ENCODE measurements at regions of chr5 and their contacts with region 1.

Region 1: GRCh38 chr5:131796793-131797693 is at the start of gene FNIP1:
- DNase-seq: peak; percentile 100
- ATAC-seq: peak; percentile 97 to 98 (median 98)
- H3K4me3 ChIP-seq: peak within 1 kb of the TSS; percentile 86 to 99 (median 97)
- H3K27ac ChIP-seq: peak within 1 kb of the TSS; percentile 97 to 100 (median 99)
- H3K4me1 ChIP-seq: peaks cover 0 to 46% (median 30%) of the 10 kb centered on the region in 12 donors
- H3K27me3 ChIP-seq: no peaks in the 10 kb centered on the region
- CTCF ChIP-seq: peak in 3 of 12 donors; percentile 14 to 26 (median 20)
- POLR2A ChIP-seq: peak; percentile 86 to 97
- total RNA-seq, gene FNIP1: 27.5 to 41.3 (median 35.1) TPM

Region 2: GRCh38 chr5:131170540-131171275 is 626.3 kb before region 1 on chr5 and contains the start of gene LYRM7:
- intact Hi-C with region 1: loop called in 1 of 10 experiments (anchors 5 kb)
- DNase-seq: peak; percentile 93 to 98 (median 97)
- ATAC-seq: peak; percentile 98 to 99 (median 99)
- H3K4me3 ChIP-seq: peak within 1 kb of the TSS; percentile 45 to 78 (median 68)
- H3K27ac ChIP-seq: peak within 1 kb of the TSS; percentile 5 to 89 (median 83)
- H3K4me1 ChIP-seq: peaks cover 0 to 23% (median 19%) of the 10 kb centered on the region in 12 donors
- H3K27me3 ChIP-seq: no peaks in the 10 kb centered on the region
- CTCF ChIP-seq: peak in 1 of 12 donors; percentile 13
- POLR2A ChIP-seq: peak; percentile 58 to 79
- total RNA-seq, gene LYRM7: 11.8 to 27.1 (median 20.3) TPM

Region 3: GRCh38 chr5:131634996-131635754 is 161.9 kb before region 1 on chr5 and contains the start of gene RAPGEF6:
- intact Hi-C with region 1: loop called in 9 of 10 experiments (anchors 1 to 10 kb)
- DNase-seq: peak; percentile 97 to 99 (median 99)
- ATAC-seq: peak; percentile 95 to 98 (median 96)
- H3K4me3 ChIP-seq: peak within 1 kb of the TSS; percentile 35 to 87 (median 70)
- H3K27ac ChIP-seq: peak within 1 kb of the TSS; percentile 93 to 100 (median 98)
- H3K4me1 ChIP-seq: peaks cover 0 to 48% (median 29%) of the 10 kb centered on the region in 12 donors
- H3K27me3 ChIP-seq: no peaks in the 10 kb centered on the region
- CTCF ChIP-seq: peak in 2 of 12 donors; percentile 15 to 16
- POLR2A ChIP-seq: peak in 1 of 2 donors; percentile 66
- total RNA-seq, gene RAPGEF6: 7.0 to 13.9 (median 10.0) TPM

Region 4: GRCh38 chr5:131706281-131706680 is 90.8 kb before region 1 on chr5:
- intact Hi-C with region 1: loop called in 3 of 10 experiments (anchors 10 kb)
- DNase-seq: peak in 1 of 5 donors; percentile 30
- ATAC-seq: no peak
- H3K4me3 ChIP-seq: no peak overlapping the region
- H3K27ac ChIP-seq: peak overlapping the region in 1 of 12 donors; percentile 59
- H3K4me1 ChIP-seq: peaks cover 0 to 13% (median 0%) of the 10 kb centered on the region in 12 donors
- H3K27me3 ChIP-seq: no peaks in the 10 kb centered on the region
- CTCF ChIP-seq: no peak
- POLR2A ChIP-seq: no peak

Region 5: GRCh38 chr5:131758520-131758900 is 38.5 kb before region 1 on chr5:
- intact Hi-C with region 1: loop called in 3 of 10 experiments (anchors 5 kb)
- DNase-seq: no peak
- ATAC-seq: peak; percentile 88 to 90 (median 89)
- H3K4me3 ChIP-seq: peak overlapping the region in 2 of 12 donors; percentile 4 to 24
- H3K27ac ChIP-seq: peak overlapping the region; percentile 37 to 83 (median 70)
- H3K4me1 ChIP-seq: peaks cover 0 to 71% (median 40%) of the 10 kb centered on the region in 12 donors
- H3K27me3 ChIP-seq: no peaks in the 10 kb centered on the region
- CTCF ChIP-seq: no peak
- POLR2A ChIP-seq: no peak

Region 6: DNA sequence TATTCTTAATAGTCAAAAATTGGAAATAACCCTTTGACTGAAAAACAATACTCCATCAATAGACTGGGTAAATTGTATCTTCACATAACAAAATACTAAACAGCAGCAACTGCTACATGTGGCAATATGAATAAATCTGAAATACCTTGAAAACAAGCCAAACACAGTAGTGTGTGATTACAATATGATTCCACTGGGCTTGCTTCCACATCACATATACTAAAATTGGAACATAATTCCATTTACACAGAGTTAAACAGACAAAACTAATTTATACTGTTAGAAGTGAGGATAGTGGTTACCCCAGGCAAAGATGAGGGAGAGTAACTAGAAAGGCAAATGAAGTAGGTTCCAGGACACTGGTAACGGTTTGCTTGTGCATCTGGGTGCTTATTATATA is 20.6 kb before region 1 on chr5:
- intact Hi-C with region 1: no loop called
- DNase-seq: no peak
- ATAC-seq: peak in 1 of 4 donors; percentile 9
- H3K4me3 ChIP-seq: no peak overlapping the region
- H3K27ac ChIP-seq: peak overlapping the region in 1 of 12 donors; percentile 15
- H3K4me1 ChIP-seq: peaks cover 0 to 72% (median 41%) of the 10 kb centered on the region in 12 donors
- H3K27me3 ChIP-seq: no peaks in the 10 kb centered on the region
- CTCF ChIP-seq: no peak
- POLR2A ChIP-seq: no peak

Measured in heart left ventricle (tissue), 16 donors.